HAP-1 (cell line): ENCODE measurements at regions of chr18 and their contacts with region 1.

Region 1: DNA sequence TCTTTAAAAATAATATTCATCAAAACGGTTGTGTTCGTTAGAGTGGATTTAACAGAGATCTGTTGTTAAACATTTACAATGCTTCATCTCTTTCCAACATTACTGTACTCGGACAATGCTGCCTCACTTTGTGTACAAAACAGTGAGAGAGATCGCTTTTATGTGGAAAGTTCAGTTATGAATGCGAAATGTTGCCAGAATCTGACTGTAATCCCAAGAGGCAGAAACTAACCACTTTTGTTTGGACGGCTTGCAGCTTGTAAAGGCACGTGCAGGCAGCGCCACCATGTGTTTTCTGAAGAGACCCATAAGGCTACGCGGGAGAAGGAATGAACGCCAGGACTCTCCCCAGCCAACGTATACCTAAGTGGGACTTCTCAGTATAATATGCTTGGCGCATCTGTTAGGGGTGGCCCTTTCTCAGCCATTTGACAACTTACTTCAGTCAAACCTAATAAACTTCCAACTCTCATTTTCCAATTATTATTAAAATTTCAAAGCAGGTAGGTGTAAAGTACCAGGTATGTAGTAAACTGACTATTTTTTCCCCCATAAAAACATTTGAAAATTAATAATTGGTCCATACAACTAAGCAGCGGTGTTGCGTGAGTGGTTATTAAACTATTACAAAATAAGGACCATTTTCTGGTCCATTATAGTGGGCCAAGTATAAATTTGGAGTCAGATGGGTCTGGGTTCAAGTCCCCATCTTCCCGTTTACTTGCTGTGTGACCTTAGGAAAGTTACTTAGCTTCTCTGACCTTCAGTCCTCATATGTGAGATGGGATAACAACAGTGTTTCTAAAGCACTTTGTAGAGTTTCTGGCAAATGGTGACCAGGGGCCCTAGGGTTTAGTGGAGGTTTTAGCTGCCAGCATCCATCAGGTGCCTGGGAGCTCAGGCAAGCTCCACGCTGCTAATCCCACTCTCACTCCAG is 5.6 kb upstream of the NAPG start:
- DNase-seq: peak; percentile 82 to 86
- H3K4me3 ChIP-seq: no peak overlapping the region
- H3K4me1 ChIP-seq: peaks cover 4% of the 10 kb centered on the region
- H3K27me3 ChIP-seq: 0 out of 2 replicates have a peak, but pooled peaks cover 12% of the 10 kb centered on the region

Region 2: GRCh38 chr18:9971313-9971920 is 548.9 kb before region 1 on chr18:
- in situ Hi-C with region 1: loop called (anchors 5 kb)
- DNase-seq: peak; percentile 68 to 83
- H3K4me3 ChIP-seq: no peak overlapping the region
- H3K4me1 ChIP-seq: no peaks in the 10 kb centered on the region
- H3K27me3 ChIP-seq: no peaks in the 10 kb centered on the region

Region 3: DNA sequence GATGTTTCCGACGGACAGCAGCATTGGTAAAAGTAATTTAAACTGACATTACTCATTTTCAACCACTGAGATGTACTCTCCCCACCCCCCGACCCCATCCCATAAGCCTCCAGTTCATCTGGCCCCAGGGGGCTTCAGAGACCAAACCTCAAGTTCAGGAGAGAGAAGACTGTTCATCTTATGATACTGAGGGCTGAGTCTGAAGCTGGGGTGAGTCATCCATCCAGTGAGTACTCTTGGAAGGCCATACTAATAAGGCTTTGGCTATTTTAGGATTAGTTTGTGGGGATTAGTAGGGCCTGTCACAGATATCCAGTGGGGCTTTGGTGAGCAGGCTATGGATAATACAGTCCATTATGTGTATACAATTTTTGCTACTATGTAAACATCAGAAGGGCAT is 191.2 kb before region 1 on chr18:
- in situ Hi-C with region 1: no loop called
- DNase-seq: no peak
- H3K4me3 ChIP-seq: no peak overlapping the region
- H3K4me1 ChIP-seq: peaks cover 3% of the 10 kb centered on the region; the same call in 1 of the 2 replicates
- H3K27me3 ChIP-seq: no peaks in the 10 kb centered on the region